Activated CD4-positive, alpha-beta T cell treated with anti-CD3 and anti-CD28 coated beads, Interleukin-2, amount 10 ng/mL, durations not matched to agents 24 days and 14 days (primary cell): ENCODE measurements at regions of chr14 and their contacts with region 1.

Region 1: DNA sequence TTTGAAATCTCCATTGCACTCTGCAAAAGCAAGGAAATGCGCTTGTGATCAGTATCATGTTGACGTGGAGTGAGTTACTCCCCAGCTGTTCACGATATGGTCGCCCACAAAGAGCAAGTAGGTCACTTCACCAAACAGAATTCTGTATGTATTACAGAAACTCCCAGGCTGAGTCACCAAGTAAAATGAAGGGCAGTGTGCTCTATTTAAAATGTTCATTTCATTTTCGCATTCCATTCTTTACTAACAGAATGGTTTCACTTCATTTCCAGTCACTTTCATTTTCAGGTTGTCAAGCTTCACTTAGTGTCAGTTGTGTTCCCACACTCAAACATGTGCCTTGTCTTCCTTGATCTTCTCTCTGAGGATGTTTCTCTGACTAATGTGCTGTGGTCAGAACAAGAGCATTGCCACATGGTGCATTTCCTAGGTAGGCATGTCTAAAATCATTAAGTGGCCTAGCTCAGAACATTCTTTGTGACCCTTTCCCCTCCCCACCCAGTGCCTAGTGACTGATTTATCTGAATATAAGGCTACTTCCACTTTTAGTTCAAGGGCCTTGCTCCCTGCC is 391.2 kb downstream of the RAD51B start:
- DNase-seq: peak; percentile 86
- H3K4me3 Mint-ChIP-seq: peak overlapping the region; percentile 80
- H3K27ac Mint-ChIP-seq: peak overlapping the region; percentile 87
- H3K4me1 Mint-ChIP-seq: peaks cover 45% of the 10 kb centered on the region
- H3K27me3 Mint-ChIP-seq: no peaks in the 10 kb centered on the region

Region 2: DNA sequence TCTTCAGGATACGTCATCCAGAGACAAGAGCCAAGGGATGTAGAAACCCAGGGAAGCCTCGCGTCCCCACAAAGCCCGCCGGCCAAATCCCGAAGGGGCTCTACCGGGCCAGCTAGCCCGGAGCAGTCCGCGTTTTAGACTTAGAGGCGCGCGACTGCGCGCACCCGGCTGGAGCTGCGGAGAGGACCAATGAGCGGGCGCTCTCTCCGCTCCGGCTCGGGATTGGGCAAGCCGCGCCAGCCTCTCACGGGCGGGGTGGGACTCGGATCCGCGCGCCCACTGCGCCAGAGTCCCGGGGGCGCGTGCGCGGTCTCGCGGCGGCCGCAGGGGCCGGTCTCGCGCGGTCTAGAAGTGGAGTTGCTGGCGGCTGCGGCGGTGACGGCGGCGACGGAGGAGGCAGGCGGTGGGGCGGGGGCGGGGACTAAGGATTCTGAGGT is 969.8 kb before region 1 on chr14:
- intact Hi-C with region 1: loop called (anchors 5 kb)
- DNase-seq: peak; percentile 98
- H3K4me3 Mint-ChIP-seq: peak overlapping the region; percentile 88
- H3K27ac Mint-ChIP-seq: peak overlapping the region; percentile 84
- H3K4me1 Mint-ChIP-seq: peaks cover 11% of the 10 kb centered on the region
- H3K27me3 Mint-ChIP-seq: peaks cover 24% of the 10 kb centered on the region

Region 3: GRCh38 chr14:68181519-68182326 is 29.1 kb before region 1 on chr14:
- intact Hi-C with region 1: loop called (anchors 1 kb)
- DNase-seq: no peak
- H3K4me3 Mint-ChIP-seq: no peak overlapping the region
- H3K27ac Mint-ChIP-seq: peak overlapping the region; percentile 15
- H3K4me1 Mint-ChIP-seq: peaks cover 29% of the 10 kb centered on the region
- H3K27me3 Mint-ChIP-seq: peaks cover 3% of the 10 kb centered on the region

Region 4: GRCh38 chr14:68232300-68233055 is 21.7 kb after region 1 on chr14:
- intact Hi-C with region 1: loop called (anchors 1 kb)
- DNase-seq: peak; percentile 71
- H3K4me3 Mint-ChIP-seq: no peak overlapping the region
- H3K27ac Mint-ChIP-seq: no peak overlapping the region
- H3K4me1 Mint-ChIP-seq: peaks cover 9% of the 10 kb centered on the region
- H3K27me3 Mint-ChIP-seq: no peaks in the 10 kb centered on the region

Region 5: DNA sequence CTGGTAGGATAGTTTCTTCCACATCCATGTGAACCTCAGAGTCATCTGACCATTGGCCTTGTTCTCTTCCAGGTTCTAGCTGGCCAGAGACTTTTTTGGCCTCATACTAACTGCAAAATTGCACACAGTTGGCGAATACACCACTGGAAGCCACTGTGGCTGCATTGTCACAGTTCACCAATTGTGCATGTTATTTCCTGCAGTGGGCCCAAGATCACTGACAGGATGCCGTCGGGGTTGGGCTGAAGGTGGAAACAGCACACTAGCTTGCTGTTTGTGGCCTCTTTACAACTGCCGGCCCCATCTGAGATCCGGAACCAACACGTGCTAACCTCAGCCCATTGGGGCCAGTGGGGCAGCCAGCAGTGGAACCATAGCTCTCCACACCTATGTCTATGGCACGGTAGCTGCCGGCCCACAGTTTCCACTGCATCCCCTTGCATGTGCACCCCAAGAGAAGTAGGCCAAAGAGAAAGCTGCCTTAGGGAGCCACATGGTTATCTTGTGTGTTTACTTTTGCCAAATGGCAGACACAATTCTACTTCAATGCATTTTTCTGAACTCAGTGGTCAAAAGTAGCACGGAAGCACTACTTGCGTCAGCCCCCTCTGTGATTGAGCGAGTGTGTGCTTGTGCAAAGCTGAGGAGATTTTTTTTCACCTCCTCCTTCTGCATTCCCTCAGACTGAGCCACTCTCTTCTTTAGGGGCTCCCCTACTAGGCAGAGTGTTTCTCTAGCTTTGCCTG is 72.7 kb after region 1 on chr14:
- intact Hi-C with region 1: loop called (anchors 5 kb)
- DNase-seq: peak; percentile 88
- H3K4me3 Mint-ChIP-seq: peak overlapping the region; percentile 62
- H3K27ac Mint-ChIP-seq: peak overlapping the region; percentile 83
- H3K4me1 Mint-ChIP-seq: peaks cover 57% of the 10 kb centered on the region
- H3K27me3 Mint-ChIP-seq: no peaks in the 10 kb centered on the region

Region 6: GRCh38 chr14:68685419-68686204 is 474.8 kb after region 1 on chr14:
- intact Hi-C with region 1: loop called (anchors 1 kb)
- DNase-seq: peak; percentile 92
- H3K4me3 Mint-ChIP-seq: peak overlapping the region; percentile 61
- H3K27ac Mint-ChIP-seq: peak overlapping the region; percentile 91
- H3K4me1 Mint-ChIP-seq: peaks cover 56% of the 10 kb centered on the region
- H3K27me3 Mint-ChIP-seq: no peaks in the 10 kb centered on the region